Endothelial cell of umbilical vein (primary cell): ENCODE measurements at regions of chr2 and their contacts with region 1.

Region 1: GRCh38 chr2:61694312-61695274 is 156.4 kb upstream of the XPO1 start:
- DNase-seq: peak; percentile 80
- H3K4me3 ChIP-seq: peak overlapping the region; percentile 88 to 90 (median 89)
- H3K27ac ChIP-seq: peak overlapping the region; percentile 10
- H3K4me1 ChIP-seq: peaks cover 4% of the 10 kb centered on the region
- H3K27me3 ChIP-seq: no peaks in the 10 kb centered on the region
- CTCF ChIP-seq: peak; percentile 54 to 74
- POLR2A ChIP-seq: peak; percentile 66

Region 2: GRCh38 chr2:61340242-61340641 is 354.4 kb before region 1 on chr2:
- CTCF ChIA-PET with region 1: no interaction called
- POLR2A ChIA-PET with region 1: no interaction called
- dilution Hi-C with region 1: no loop called
- intact Hi-C with region 1: no loop called
- DNase-seq: peak; percentile 72
- H3K4me3 ChIP-seq: no peak overlapping the region
- H3K27ac ChIP-seq: peak overlapping the region; percentile 68
- H3K4me1 ChIP-seq: peaks cover 11% of the 10 kb centered on the region
- H3K27me3 ChIP-seq: no peaks in the 10 kb centered on the region
- CTCF ChIP-seq: no peak
- POLR2A ChIP-seq: no peak

Region 3: DNA sequence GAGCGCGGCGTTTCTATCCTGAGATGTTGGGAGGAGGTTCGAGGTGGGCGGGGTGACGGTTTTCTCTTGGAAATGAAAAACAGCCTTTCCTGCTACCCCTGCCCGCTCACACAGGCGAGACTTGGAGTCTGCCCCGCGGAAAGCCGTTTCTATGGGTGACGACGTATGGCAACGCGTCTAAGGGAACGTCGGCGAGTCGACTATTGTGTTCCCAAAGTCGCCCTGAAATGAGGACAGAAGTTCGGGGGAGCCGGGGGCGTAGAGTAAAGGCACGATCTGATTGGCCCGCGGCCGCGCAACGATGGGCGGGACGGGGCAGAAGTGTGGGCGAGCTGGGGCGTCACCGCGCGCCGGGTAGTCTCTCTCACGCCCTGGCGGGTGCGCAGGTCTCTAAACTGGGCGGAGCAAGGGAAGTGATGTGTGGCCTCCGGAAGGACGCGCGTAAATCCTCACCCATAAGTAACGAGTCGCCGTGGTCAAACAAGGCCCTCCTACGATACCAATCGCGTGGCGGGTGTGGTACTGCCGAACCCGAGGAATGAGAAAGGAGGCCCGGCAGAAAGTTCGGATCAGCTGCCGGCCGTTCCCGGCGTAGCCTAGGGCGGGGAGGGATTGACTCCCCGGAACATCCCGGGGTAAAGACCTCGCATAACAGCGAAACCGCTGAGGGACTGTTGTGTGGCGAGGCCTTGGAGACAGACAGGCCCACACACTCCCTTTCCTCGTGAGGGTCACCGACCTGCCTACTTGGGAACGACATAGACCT is 69.6 kb after region 1 on chr2:
- CTCF ChIA-PET with region 1: interaction called, 3 read pairs
- POLR2A ChIA-PET with region 1: no interaction called
- dilution Hi-C with region 1: no loop called
- intact Hi-C with region 1: loop called (anchors 1 kb)
- DNase-seq: peak; percentile 99
- H3K4me3 ChIP-seq: peak overlapping the region; percentile 45 to 84 (median 53)
- H3K27ac ChIP-seq: peak overlapping the region; percentile 99
- H3K4me1 ChIP-seq: peaks cover 9% of the 10 kb centered on the region
- H3K27me3 ChIP-seq: peaks cover 0 to 2% of the 10 kb centered on the region in 2 experiments
- CTCF ChIP-seq: peak in 1 of 2 donors; percentile 1
- POLR2A ChIP-seq: peak; percentile 61

Region 4: DNA sequence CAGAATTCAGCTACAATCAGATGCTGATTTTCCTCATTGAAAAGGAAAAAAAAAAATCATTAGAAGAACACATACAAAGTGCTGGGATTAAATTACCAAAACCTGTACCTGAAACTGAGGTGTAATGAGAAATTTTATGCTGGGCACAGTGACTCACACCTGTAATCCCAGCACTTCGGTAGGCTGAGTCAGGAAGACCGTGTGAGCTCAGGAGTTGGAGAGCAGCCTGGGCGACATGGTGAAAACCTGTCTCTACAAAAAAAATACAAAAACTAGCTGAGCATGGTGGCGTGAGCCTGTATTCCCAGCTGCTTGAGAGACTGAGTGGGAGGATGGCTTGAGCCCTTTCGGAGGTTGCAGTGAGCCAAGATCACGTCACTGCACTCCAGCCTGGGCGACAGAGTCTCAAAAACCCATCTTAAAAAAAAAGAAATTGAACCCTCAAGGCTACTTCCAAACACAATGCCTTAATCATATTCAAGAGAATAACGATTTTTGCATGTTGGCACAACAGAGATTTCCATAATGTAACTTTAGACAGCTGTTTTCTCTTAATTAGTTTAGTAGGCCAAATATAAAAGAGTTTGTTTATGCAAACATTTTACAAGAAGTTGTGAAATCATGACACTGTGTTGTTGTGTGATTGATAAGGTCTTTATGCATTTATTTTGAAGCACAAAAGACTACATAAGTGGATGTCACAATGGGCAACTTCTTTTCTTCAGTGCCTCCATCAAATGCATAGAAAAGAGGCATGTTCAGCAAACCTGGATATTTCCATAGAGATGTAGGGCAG is 95.4 kb after region 1 on chr2:
- CTCF ChIA-PET with region 1: interaction called, 3 read pairs
- POLR2A ChIA-PET with region 1: no interaction called
- dilution Hi-C with region 1: no loop called
- intact Hi-C with region 1: loop called (anchors 10 kb)
- DNase-seq: no peak
- H3K4me3 ChIP-seq: no peak overlapping the region
- H3K27ac ChIP-seq: no peak overlapping the region
- H3K4me1 ChIP-seq: no peaks in the 10 kb centered on the region
- H3K27me3 ChIP-seq: peaks cover 2 to 4% of the 10 kb centered on the region in 2 experiments
- CTCF ChIP-seq: no peak
- POLR2A ChIP-seq: no peak